ENCODE measurements at regions of chr9 and their contacts with region 1.

Region 1: GRCh38 chr9:96854073-96854876 is at the start of gene ZNF782:
- DNase-seq: peak; percentile 95
- H3K4me3 ChIP-seq: peak within 1 kb of the TSS; percentile 77 to 86 (median 82)
- H3K27ac ChIP-seq: peak within 1 kb of the TSS; percentile 84 to 89 (median 88)
- H3K4me1 ChIP-seq: peaks cover 0 to 35% (median 24%) of the 10 kb centered on the region in 4 donors
- H3K27me3 ChIP-seq: no peaks in the 10 kb centered on the region
- CTCF ChIP-seq: no peak
- EP300 ChIP-seq: peak in 1 of 4 donors; percentile 6
- POLR2A ChIP-seq: peak in 1 of 2 donors; percentile 42
- total RNA-seq, gene ZNF782: 11.4 to 18.2 (median 15.7) TPM

Region 2: DNA sequence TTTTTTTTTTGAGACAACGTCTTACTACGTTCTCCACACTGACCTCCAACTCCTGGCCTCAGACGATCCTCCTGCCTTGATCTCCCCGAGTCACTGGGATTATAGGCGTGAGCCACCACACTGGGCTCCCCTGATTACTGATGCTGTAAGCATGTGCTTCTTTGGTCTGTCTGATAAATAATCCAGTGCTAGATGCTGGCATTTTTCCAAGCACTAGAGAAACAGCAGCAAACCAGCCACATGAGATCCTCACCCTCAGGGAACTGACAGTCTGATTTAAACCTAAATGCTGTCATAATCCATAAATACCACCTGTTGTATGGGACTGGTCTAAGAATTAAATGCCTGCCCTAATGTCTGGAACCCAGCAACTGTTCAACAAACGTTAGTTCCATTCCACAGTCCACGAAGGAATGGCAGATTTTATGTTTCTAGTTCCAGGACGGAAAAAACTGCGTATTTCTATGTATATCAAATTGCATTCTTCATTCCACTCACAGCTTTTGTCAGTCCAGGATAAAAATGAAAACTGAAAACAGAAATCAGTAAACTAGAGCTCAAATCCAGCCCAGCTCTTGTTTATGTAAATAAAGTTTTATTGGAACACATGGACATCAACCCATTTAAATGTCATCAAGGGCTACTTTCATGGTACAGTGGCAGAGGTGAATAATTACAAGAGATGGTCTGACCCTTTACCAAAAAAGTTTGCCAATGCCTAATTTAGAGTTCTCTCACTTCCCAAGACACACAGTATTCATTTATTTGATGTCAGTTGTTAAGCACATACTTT is 490.9 kb before region 1 on chr9:
- intact Hi-C with region 1: no loop called
- DNase-seq: no peak
- H3K4me3 ChIP-seq: no peak overlapping the region
- H3K27ac ChIP-seq: no peak overlapping the region
- H3K4me1 ChIP-seq: no peaks in the 10 kb centered on the region
- H3K27me3 ChIP-seq: no peaks in the 10 kb centered on the region
- CTCF ChIP-seq: no peak
- EP300 ChIP-seq: no peak
- POLR2A ChIP-seq: no peak

Region 3: DNA sequence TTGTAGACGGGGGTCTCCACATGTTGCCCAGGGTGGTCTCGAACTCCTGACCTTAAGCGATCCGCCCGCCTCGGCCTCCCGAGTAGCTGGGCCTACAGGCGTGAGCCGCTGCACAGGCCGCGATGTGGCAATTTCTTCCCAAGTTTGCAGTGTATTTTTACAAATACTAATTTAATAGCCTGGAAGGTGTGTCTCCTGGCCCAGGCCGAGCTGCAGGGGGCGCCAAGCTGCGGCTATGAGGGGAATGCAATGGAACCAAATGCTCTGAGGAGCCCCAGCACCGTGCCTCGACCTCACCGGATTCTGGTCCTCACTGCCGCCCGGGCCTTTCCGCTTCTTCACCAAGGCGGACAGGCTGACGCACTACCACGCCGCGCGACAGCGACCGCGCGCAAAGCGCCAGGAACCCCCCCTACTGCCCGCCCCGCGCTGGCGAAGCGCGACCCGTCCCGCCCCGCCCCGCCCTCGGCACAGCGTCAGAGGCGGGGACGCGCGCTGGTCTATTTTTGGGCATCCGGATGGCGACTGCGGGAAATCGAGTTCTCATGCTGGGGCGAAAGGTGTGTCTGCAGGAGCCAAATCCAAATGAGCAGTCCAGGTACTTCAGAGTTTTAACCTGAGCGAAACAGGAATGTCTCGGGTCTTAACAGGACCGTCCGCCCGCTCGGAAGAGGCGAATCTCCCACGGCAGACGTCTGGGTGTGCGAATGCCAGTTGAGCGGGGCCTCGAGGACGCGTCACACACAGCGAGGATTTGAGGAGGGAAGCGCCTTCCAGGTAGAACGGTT is 167.5 kb before region 1 on chr9:
- intact Hi-C with region 1: loop called (anchors 5 kb)
- DNase-seq: peak; percentile 90
- H3K4me3 ChIP-seq: peak overlapping the region; percentile 38 to 60 (median 54)
- H3K27ac ChIP-seq: peak overlapping the region; percentile 68 to 84 (median 76)
- H3K4me1 ChIP-seq: peaks cover 0 to 6% (median 3%) of the 10 kb centered on the region in 4 donors
- H3K27me3 ChIP-seq: no peaks in the 10 kb centered on the region
- CTCF ChIP-seq: peak; percentile 18 to 58 (median 42)
- EP300 ChIP-seq: no peak
- POLR2A ChIP-seq: no peak

Region 4: GRCh38 chr9:96777426-96777864 is 76.8 kb before region 1 on chr9:
- intact Hi-C with region 1: loop called (anchors 2 kb)
- DNase-seq: no peak
- H3K4me3 ChIP-seq: peak overlapping the region; percentile 61 to 91 (median 74)
- H3K27ac ChIP-seq: peak overlapping the region; percentile 81 to 84 (median 84)
- H3K4me1 ChIP-seq: peaks cover 0 to 20% (median 10%) of the 10 kb centered on the region in 4 donors
- H3K27me3 ChIP-seq: no peaks in the 10 kb centered on the region
- CTCF ChIP-seq: no peak
- EP300 ChIP-seq: no peak
- POLR2A ChIP-seq: no peak

Region 5: DNA sequence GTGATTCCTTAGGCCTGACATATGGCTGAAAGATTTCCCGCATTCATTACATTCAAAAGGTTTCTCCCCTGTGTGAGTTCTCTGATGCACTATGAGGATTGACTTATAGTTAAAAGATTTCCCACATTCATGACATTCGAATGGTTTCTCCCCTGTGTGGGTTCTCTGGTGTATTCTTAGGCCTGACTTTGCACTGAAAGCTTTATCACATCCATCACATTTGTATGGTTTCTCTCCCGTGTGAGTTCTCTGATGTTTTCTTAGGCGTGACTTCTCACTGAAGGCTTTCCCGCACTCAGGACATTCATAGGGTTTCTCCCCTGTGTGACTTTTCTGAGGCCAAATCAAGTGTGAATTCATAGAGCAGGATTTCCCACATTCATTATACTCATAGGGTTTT is 35.7 kb before region 1 on chr9:
- intact Hi-C with region 1: no loop called
- DNase-seq: no peak
- H3K4me3 ChIP-seq: no peak overlapping the region
- H3K27ac ChIP-seq: no peak overlapping the region
- H3K4me1 ChIP-seq: no peaks in the 10 kb centered on the region
- H3K27me3 ChIP-seq: no peaks in the 10 kb centered on the region
- CTCF ChIP-seq: no peak
- EP300 ChIP-seq: no peak
- POLR2A ChIP-seq: no peak

Region 6: DNA sequence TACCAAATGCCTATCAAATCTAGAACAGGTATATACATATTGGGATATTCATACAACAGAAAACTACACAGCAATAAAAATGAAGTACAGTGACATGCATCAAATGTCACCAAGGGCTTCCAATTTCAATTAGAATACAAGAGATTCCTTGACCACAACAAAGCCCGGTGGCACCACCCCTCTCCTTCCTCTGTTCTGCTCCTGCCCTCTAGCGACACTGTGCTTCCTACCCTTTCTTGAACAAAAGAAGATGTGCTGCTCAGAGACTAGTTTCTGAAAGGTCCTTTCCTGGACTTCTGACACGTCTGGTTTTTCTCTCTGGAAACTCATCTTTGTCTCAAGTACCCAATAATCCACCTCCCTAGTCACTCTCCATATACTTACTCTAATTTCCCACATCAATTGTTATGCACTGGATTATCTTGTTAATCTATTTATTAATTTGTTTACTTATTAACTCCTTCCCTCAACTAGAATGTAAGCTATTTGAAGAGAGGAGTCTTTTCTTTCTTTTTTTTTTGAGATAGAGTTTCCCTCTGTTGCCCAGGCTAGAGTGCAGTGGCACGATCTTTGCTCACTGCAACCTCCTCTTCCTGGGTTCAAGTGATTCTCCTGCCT is 255.0 kb after region 1 on chr9:
- intact Hi-C with region 1: loop called (anchors 10 kb)
- DNase-seq: no peak
- H3K4me3 ChIP-seq: no peak overlapping the region
- H3K27ac ChIP-seq: no peak overlapping the region
- H3K4me1 ChIP-seq: no peaks in the 10 kb centered on the region
- H3K27me3 ChIP-seq: no peaks in the 10 kb centered on the region
- CTCF ChIP-seq: no peak
- EP300 ChIP-seq: no peak
- POLR2A ChIP-seq: no peak

Region 7: DNA sequence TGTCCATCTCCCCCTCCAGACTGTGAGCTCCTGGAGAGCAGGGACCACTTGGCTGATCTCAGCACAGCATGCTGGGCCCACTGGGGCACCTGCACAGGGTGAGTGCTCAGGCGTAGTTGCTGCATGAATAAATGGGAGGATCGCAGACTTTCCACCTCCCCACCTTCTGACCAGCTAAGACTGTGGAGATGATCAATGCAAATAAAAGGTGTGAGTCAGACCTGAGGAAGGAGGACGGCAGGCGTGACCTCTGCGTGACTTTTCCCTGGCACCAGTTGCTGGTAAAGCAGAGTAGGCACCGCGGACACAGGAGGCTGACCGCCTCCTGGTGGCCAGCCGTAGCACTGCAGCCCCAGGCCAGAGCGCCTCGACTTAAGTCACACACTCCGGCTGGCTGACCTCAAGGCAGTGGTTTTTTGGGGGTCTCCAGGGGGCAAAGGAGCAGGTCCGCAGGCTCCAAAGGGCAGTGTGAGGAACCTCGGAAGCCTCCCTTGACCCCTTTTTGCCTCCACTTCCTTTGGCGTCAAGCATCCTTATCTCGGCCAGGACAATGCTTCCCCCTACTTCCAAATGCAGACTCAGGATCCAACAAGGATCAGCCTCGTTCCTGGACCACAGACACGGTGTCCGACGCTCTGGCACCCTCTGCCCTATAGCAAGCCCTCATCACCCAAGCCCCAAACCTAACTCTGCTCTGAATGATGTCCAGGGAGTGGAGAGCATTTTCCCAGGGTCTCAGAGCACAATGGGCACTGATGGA is 544.9 kb after region 1 on chr9:
- intact Hi-C with region 1: loop called (anchors 5 kb)
- DNase-seq: no peak
- H3K4me3 ChIP-seq: no peak overlapping the region
- H3K27ac ChIP-seq: no peak overlapping the region
- H3K4me1 ChIP-seq: no peaks in the 10 kb centered on the region
- H3K27me3 ChIP-seq: no peaks in the 10 kb centered on the region
- CTCF ChIP-seq: peak; percentile 52 to 72 (median 63)
- EP300 ChIP-seq: no peak
- POLR2A ChIP-seq: no peak

Region 8: DNA sequence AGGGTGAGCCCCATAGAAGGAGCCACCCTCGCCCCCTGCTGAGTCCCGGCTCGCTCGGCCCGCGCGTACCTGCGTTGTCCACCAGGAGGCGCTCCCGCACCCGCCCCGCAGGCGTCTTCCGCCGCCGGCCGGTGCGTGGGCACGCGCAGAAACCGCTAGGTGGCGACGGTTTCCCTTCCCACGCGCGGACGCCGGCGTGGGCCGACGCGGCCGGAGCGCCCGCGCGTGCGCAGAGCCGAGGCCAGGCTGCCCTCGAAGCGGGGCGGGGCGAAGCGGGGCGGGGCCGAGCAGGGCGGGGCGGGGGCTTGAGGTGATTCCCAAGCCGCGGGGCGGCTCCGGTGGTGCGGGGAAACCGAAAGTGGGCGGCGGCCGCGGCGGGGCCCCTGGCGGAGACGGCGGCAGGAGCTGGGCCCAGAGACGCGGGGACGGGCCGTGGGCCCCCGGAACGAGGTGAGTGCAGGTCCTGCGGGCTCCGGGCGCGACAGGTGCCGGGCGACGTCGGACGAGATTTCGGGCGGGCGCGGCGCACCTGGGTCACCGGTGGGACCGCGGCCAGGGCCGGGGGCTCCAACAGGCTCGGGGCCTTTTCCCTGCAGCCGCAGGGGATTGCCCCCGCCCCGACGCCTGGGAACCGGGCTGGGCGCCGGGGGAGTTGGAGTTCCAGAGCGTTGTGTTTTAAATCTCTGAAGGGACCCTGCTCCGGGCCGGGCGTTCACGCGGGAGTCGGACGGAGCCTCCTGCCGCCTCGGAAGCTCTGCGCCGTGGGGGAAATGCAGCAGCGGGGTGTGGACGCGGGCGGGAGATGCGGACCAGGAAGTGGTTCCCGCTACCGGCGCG is 557.7 kb after region 1 on chr9 and contains the start of gene TDRD7:
- intact Hi-C with region 1: loop called (anchors 5 kb)
- DNase-seq: peak; percentile 91
- H3K4me3 ChIP-seq: peak within 1 kb of the TSS; percentile 84 to 100 (median 94)
- H3K27ac ChIP-seq: peak within 1 kb of the TSS; percentile 87 to 91 (median 91)
- H3K4me1 ChIP-seq: peaks cover 0 to 15% (median 8%) of the 10 kb centered on the region in 4 donors
- H3K27me3 ChIP-seq: peaks cover 0 to 4% (median 0%) of the 10 kb centered on the region in 3 donors
- CTCF ChIP-seq: peak; percentile 87 to 99 (median 93)
- EP300 ChIP-seq: no peak
- POLR2A ChIP-seq: no peak
- total RNA-seq, gene TDRD7: 10.5 to 20.9 (median 15.3) TPM

Region 9: GRCh38 chr9:97632985-97633858 is 778.9 kb after region 1 on chr9 and contains the starts of genes NCBP1 and TSTD2:
- intact Hi-C with region 1: loop called (anchors 10 kb)
- DNase-seq: peak; percentile 99
- H3K4me3 ChIP-seq: peak within 1 kb of the TSS; percentile 73 to 91 (median 79)
- H3K27ac ChIP-seq: peak within 1 kb of the TSS; percentile 85 to 98 (median 94)
- H3K4me1 ChIP-seq: peaks cover 0 to 66% (median 43%) of the 10 kb centered on the region in 4 donors
- H3K27me3 ChIP-seq: no peaks in the 10 kb centered on the region
- CTCF ChIP-seq: no peak
- EP300 ChIP-seq: peak in 1 of 4 donors; percentile 30
- POLR2A ChIP-seq: peak; percentile 79 to 80
- total RNA-seq, gene NCBP1: 13.9 to 20.2 (median 18.7) TPM
- total RNA-seq, gene TSTD2: 15.5 to 31.2 (median 24.9) TPM